AG04450 (cell line): ENCODE measurements at regions of chr6 and their contacts with region 1.

Region 1: GRCh38 chr6:17584241-17584803 is 15.8 kb upstream of the FAM8A1 start:
- DNase-seq: peak; percentile 64
- H3K4me3 ChIP-seq: no peak overlapping the region
- H3K27ac ChIP-seq: no peak overlapping the region
- H3K27me3 ChIP-seq: no peaks in the 10 kb centered on the region
- CTCF ChIP-seq: peak; percentile 80

Region 2: GRCh38 chr6:17093686-17094085 is 490.6 kb before region 1 on chr6:
- CTCF ChIA-PET with region 1: no interaction called
- POLR2A ChIA-PET with region 1: no interaction called
- DNase-seq: no peak
- H3K4me3 ChIP-seq: no peak overlapping the region
- H3K27ac ChIP-seq: no peak overlapping the region
- H3K27me3 ChIP-seq: peaks cover 2% of the 10 kb centered on the region
- CTCF ChIP-seq: peak; percentile 41; the same call in 1 of the 2 replicates

Region 3: DNA sequence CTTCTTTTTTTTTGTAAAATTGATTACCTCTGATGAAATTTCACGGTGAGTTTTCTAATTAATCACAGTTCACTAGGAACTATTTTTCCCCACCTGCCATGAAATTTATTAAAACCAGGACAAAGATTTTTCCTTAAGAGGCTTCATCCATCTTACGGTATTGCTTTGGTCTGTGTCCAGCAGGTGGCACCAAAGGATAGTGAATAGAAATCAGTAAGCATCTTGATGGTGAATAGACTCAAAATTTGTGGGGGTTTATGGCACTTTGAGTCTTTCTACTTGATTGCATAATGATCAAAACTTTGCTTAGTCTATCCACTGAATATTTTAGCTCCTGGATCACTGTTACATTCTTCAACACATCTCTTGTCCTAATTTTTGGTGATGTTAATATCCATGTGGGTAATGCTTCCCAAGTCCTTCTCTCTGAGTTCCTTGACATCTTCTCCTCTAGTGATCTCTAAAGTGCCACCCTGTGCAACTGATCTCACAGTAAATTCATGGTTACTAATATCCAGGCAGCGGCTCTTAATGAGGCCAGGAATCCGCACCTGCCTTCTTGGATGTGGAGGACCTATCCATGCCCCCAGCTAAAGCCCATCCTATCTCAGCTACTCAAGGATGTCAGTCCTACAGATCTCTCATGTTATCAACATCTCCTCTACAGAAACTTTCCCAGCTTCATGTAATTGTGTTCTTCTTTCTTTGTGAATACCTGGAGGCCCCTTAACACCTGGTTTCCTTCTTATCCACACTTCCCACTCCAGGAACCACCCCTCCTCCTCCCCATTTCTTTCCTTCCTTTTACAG is 428.0 kb before region 1 on chr6:
- CTCF ChIA-PET with region 1: interaction called, 34 read pairs
- POLR2A ChIA-PET with region 1: interaction called, 3 read pairs
- DNase-seq: peak; percentile 69
- H3K4me3 ChIP-seq: no peak overlapping the region
- H3K27ac ChIP-seq: no peak overlapping the region
- H3K27me3 ChIP-seq: peaks cover 2% of the 10 kb centered on the region
- CTCF ChIP-seq: peak; percentile 74

Region 4: GRCh38 chr6:17169291-17169690 is 415.0 kb before region 1 on chr6:
- CTCF ChIA-PET with region 1: interaction called, 12 read pairs
- POLR2A ChIA-PET with region 1: no interaction called
- DNase-seq: peak; percentile 68
- H3K4me3 ChIP-seq: no peak overlapping the region
- H3K27ac ChIP-seq: peak overlapping the region; percentile 41
- H3K27me3 ChIP-seq: no peaks in the 10 kb centered on the region
- CTCF ChIP-seq: peak; percentile 32; the same call in 1 of the 2 replicates